CD14-positive monocyte (primary cell): ENCODE measurements at regions of chr19 and their contacts with region 1.

Region 1: GRCh38 chr19:17938092-17938845 is 5.5 kb downstream of the CCDC124 start:
- DNase-seq: peak; percentile 66 to 82 (median 77)
- H3K4me3 ChIP-seq: no peak overlapping the region
- H3K4me3 Mint-ChIP-seq: no peak overlapping the region
- H3K27ac ChIP-seq: no peak overlapping the region
- H3K27ac Mint-ChIP-seq: peak overlapping the region in 1 of 7 donors; percentile 41
- H3K4me1 ChIP-seq: peaks cover 6 to 8% of the 10 kb centered on the region in 2 donors
- H3K4me1 Mint-ChIP-seq: peaks cover 8% of the 10 kb centered on the region
- H3K27me3 ChIP-seq: no peaks in the 10 kb centered on the region
- H3K27me3 Mint-ChIP-seq: peaks cover 0 to 3% (median 0%) of the 10 kb centered on the region in 3 donors
- CTCF ChIP-seq: peak; percentile 94

Region 2: GRCh38 chr19:17794731-17795536 is 143.3 kb before region 1 on chr19 and contains the start of gene B3GNT3:
- intact Hi-C with region 1: no loop called
- DNase-seq: peak in 1 of 3 donors; percentile 7
- H3K4me3 ChIP-seq: peak within 1 kb of the TSS in 1 of 3 experiments; percentile 63
- H3K4me3 Mint-ChIP-seq: peak within 1 kb of the TSS in 1 of 2 donors; percentile 84
- H3K27ac ChIP-seq: no peak within 1 kb of the TSS
- H3K27ac Mint-ChIP-seq: peak within 1 kb of the TSS in 1 of 7 donors; percentile 2
- H3K4me1 ChIP-seq: peaks cover 10 to 13% of the 10 kb centered on the region in 2 donors
- H3K4me1 Mint-ChIP-seq: peaks cover 25% of the 10 kb centered on the region
- H3K27me3 ChIP-seq: peaks cover 9 to 38% of the 10 kb centered on the region in 2 donors
- H3K27me3 Mint-ChIP-seq: peaks cover 52 to 78% (median 70%) of the 10 kb centered on the region in 3 donors
- CTCF ChIP-seq: no peak
- polyA plus RNA-seq, gene B3GNT3: not detected

Region 3: GRCh38 chr19:18000935-18001778 is 62.9 kb after region 1 on chr19:
- intact Hi-C with region 1: loop called (anchors 1 kb)
- DNase-seq: peak; percentile 94 to 95 (median 94)
- H3K4me3 ChIP-seq: peak overlapping the region; percentile 83 to 87 (median 85)
- H3K4me3 Mint-ChIP-seq: peak overlapping the region; percentile 90 to 92
- H3K27ac ChIP-seq: peak overlapping the region; percentile 80 to 85
- H3K27ac Mint-ChIP-seq: peak overlapping the region; percentile 95 to 98 (median 96)
- H3K4me1 ChIP-seq: peaks cover 27 to 41% of the 10 kb centered on the region in 2 donors
- H3K4me1 Mint-ChIP-seq: peaks cover 29% of the 10 kb centered on the region
- H3K27me3 ChIP-seq: no peaks in the 10 kb centered on the region
- H3K27me3 Mint-ChIP-seq: peaks cover 0 to 4% (median 0%) of the 10 kb centered on the region in 3 donors
- CTCF ChIP-seq: no peak

Region 4: DNA sequence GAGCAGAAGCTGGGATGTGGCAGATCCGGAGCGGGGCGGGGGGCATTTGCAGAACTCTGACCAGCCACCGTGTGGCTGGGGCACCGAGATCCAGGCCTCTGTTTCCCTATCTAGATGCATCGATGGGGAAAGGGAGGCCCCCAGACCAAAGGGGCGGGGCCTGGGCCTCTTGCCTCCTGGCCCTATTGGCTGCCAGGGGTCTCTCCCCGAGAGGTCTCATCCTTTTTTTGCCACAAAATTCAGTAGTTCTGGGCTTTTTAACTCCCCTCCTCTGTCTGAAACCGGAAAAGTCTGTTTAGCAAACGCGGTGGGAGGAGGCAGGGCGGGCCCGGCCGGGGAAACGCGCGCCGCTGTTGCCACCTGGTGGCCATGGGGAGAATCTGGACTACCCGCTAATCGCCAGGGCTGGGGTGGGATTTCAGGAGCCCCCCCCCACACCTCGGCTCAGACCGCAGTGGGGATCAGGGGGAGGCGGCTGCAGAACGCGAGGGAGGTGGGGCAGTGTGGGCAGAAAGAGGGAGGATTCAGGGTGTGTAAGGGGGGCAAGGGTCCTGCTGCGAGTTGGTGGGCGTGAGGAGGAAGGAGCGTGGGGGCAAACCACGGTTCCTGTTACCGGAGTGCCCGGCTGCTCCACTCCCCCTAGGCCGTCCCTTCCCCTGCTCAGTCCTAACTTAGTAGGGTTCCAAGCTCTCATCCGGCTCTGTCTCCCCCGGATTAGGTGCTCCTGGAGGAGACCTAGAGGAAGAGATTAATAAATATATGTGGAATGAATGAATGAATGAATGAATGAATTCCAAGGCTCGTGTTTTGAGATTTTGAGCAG is 120.2 kb after region 1 on chr19:
- intact Hi-C with region 1: loop called (anchors 2 to 5 kb)
- DNase-seq: peak; percentile 64 to 74 (median 72)
- H3K4me3 ChIP-seq: peak overlapping the region; percentile 1 to 69 (median 40)
- H3K4me3 Mint-ChIP-seq: peak overlapping the region; percentile 68 to 80
- H3K27ac ChIP-seq: peak overlapping the region; percentile 54 to 61
- H3K27ac Mint-ChIP-seq: peak overlapping the region; percentile 45 to 88 (median 74)
- H3K4me1 ChIP-seq: peaks cover 14 to 19% of the 10 kb centered on the region in 2 donors
- H3K4me1 Mint-ChIP-seq: peaks cover 18% of the 10 kb centered on the region
- H3K27me3 ChIP-seq: no peaks in the 10 kb centered on the region
- H3K27me3 Mint-ChIP-seq: peaks cover 0 to 3% (median 2%) of the 10 kb centered on the region in 3 donors
- CTCF ChIP-seq: peak; percentile 98

Region 5: DNA sequence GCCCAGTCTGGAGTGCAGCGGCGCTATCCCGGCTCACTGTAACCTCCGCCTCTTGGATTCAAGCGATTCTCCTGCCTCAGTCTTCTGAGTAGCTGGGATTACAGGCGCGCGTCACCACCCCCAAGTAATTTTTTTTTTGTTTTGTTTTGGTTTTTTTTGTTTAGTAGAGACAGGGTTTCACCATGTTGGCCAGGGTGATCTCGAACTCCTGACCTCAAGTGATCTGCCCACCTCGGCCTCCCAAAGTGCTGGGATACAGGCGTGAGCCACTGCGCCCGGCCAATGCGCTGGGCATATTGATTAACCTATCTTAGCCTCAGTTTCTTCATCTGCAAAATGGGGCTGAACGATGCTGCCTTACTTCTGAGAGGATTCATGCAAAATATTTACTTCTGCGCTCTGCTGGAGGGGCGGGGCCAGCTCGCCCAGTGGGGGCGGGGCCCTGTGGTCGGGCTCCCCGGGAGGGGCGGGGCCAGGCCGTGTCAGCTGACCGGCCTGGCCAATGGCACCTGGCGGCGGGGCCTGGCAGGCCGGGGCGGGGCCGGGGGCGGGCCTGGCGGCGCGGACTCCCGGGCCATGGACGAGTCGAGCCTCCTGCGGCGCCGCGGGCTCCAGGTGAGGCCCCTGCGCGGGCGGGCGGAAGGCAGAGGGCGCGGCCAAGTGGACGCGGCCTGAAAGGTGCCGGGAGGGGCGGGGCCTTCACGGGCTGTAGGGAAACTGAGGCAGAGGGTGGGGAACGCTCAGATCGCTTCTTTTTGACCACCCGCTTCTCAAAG is 159.1 kb after region 1 on chr19 and contains the start of gene MAST3:
- intact Hi-C with region 1: no loop called
- DNase-seq: peak; percentile 85 to 88 (median 86)
- H3K4me3 ChIP-seq: peak within 1 kb of the TSS; percentile 53 to 81 (median 55)
- H3K4me3 Mint-ChIP-seq: peak within 1 kb of the TSS; percentile 81 to 90
- H3K27ac ChIP-seq: no peak within 1 kb of the TSS
- H3K27ac Mint-ChIP-seq: peak within 1 kb of the TSS in 5 of 7 donors; percentile 12 to 73 (median 62)
- H3K4me1 ChIP-seq: peaks cover 31 to 41% of the 10 kb centered on the region in 2 donors
- H3K4me1 Mint-ChIP-seq: peaks cover 39% of the 10 kb centered on the region
- H3K27me3 ChIP-seq: peaks cover 0 to 5% of the 10 kb centered on the region in 2 donors
- H3K27me3 Mint-ChIP-seq: peaks cover 10 to 20% (median 16%) of the 10 kb centered on the region in 3 donors
- CTCF ChIP-seq: no peak
- polyA plus RNA-seq, gene MAST3: 6.8 to 34.0 (median 12.4) TPM